ENCODE measurements at regions of chr20 and their contacts with region 1.

Region 1: DNA sequence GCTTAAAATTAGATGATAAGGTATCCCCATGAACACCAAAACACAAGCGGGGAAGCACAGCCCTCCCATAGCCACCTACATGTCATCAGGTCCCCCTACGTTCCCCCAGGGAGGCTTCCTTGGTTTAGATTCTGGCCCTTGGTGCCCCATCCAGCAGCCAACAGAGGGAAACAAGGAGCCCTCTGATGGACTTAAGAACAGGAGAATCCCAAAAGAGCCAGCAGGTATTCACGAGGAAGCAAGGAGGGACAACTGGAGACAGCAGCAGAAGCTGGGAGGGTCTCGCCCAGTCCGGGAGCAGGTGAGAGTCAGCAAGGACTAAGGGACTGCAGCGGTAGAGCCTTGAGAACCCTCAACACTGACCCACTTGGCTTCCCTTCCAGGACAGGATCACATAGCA is 58.4 kb upstream of the TOP1 start:
- DNase-seq: no peak
- ATAC-seq: no peak
- H3K4me3 Mint-ChIP-seq: no peak overlapping the region
- H3K27ac Mint-ChIP-seq: no peak overlapping the region
- H3K4me1 Mint-ChIP-seq: peaks cover 14% of the 10 kb centered on the region
- H3K27me3 Mint-ChIP-seq: peaks cover 2% of the 10 kb centered on the region
- CTCF ChIP-seq: no peak

Region 2: DNA sequence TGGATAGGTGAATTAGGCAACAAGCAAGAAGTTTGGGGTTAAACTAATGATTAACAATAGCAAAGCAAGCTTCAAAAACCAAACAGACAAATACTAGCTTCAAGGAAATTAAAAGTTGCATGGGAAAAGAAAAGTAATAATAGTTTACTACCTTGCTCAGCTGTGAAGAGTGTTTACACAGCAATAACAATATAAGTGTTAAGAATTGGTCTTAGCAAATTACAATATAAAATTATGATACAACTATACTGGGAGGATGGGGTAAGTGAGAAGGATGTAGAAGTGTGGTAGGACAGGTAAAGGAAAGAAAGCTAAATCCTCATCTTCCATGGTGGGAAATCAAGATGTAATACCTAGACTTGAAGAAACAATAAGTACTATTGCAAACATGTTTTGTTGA is 143.5 kb before region 1 on chr20:
- CTCF ChIA-PET with region 1: no interaction called
- POLR2A ChIA-PET with region 1: no interaction called
- intact Hi-C with region 1: no loop called
- DNase-seq: no peak
- ATAC-seq: no peak
- H3K4me3 Mint-ChIP-seq: no peak overlapping the region
- H3K27ac Mint-ChIP-seq: no peak overlapping the region
- H3K4me1 Mint-ChIP-seq: no peaks in the 10 kb centered on the region
- H3K27me3 Mint-ChIP-seq: peaks cover 8% of the 10 kb centered on the region
- CTCF ChIP-seq: no peak

Region 3: GRCh38 chr20:41011551-41012067 is 41.4 kb after region 1 on chr20:
- CTCF ChIA-PET with region 1: no interaction called
- POLR2A ChIA-PET with region 1: interaction called, 4 read pairs
- intact Hi-C with region 1: loop called (anchors 1 kb)
- DNase-seq: peak; percentile 40
- ATAC-seq: peak; percentile 94
- H3K4me3 Mint-ChIP-seq: peak overlapping the region; percentile 70
- H3K27ac Mint-ChIP-seq: peak overlapping the region; percentile 84
- H3K4me1 Mint-ChIP-seq: peaks cover 49% of the 10 kb centered on the region
- H3K27me3 Mint-ChIP-seq: no peaks in the 10 kb centered on the region
- CTCF ChIP-seq: no peak

Region 4: DNA sequence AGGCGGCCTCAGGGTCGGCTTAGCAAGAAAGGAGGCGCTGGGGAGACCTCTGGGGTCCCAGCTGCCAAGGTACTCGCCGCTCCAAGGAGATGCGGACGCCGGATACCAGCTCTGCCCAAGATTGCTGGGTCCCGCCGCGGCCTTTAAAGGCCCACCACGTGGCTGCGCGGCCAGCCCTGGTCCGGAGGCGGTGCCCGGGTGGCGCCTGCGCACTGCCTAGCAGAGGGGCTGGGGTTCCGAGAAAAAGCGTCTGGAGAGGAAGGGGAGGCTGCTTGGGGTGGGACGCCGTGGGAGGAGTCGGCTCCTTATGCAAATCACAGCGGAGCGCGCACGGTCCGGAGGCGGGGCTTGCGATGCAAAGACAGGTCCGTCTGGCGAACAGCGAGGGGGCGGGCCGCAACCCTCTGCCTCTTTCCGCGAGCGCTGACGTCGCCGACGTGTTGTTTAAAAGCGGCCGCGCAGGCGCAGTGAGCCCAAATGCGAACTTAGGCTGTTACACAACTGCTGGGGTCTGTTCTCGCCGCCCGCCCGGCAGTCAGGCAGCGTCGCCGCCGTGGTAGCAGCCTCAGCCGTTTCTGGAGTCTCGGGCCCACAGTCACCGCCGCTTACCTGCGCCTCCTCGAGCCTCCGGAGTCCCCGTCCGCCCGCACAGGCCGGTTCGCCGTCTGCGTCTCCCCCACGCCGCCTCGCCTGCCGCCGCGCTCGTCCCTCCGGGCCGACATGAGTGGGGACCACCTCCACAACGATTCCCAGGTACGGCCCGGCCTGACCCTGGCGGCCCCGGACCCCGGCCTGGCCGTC is 58.3 kb after region 1 on chr20 and contains the start of gene TOP1:
- CTCF ChIA-PET with region 1: no interaction called
- POLR2A ChIA-PET with region 1: no interaction called
- intact Hi-C with region 1: loop called (anchors 2 kb)
- DNase-seq: peak; percentile 98
- ATAC-seq: peak; percentile 98
- H3K4me3 Mint-ChIP-seq: peak within 1 kb of the TSS; percentile 93
- H3K27ac Mint-ChIP-seq: peak within 1 kb of the TSS; percentile 90
- H3K4me1 Mint-ChIP-seq: peaks cover 57% of the 10 kb centered on the region
- H3K27me3 Mint-ChIP-seq: no peaks in the 10 kb centered on the region
- CTCF ChIP-seq: no peak
- total RNA-seq, gene TOP1: 62.7 and 63.3 TPM in 2 replicates

Region 5: GRCh38 chr20:41064377-41064776 is 94.2 kb after region 1 on chr20:
- CTCF ChIA-PET with region 1: interaction called, 11 read pairs
- POLR2A ChIA-PET with region 1: no interaction called
- intact Hi-C with region 1: loop called (anchors 1 kb)
- DNase-seq: no peak
- ATAC-seq: peak; percentile 62
- H3K4me3 Mint-ChIP-seq: peak overlapping the region; percentile 33
- H3K27ac Mint-ChIP-seq: no peak overlapping the region
- H3K4me1 Mint-ChIP-seq: peaks cover 52% of the 10 kb centered on the region
- H3K27me3 Mint-ChIP-seq: no peaks in the 10 kb centered on the region
- CTCF ChIP-seq: no peak

Region 6: DNA sequence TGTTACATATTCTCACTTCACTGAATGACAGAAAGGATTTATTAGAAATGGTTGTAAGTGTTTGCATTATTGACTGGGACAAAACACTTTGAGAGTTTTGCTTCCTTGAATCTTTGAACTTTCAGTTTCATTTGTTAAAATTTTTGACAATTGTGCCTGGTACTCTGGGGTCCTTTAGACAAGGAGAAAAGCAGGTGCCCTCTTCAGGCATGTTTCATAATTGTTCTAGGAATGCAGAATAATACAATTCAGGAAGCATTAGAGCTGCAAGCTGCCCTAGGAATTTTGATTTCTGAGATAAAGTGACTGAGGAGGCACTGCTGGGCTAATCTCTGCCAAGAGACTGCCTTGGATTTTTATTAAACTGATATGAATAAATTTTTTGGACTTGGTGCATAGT is 108.1 kb after region 1 on chr20:
- CTCF ChIA-PET with region 1: interaction called, 20 read pairs
- POLR2A ChIA-PET with region 1: no interaction called
- intact Hi-C with region 1: loop called (anchors 1 kb)
- DNase-seq: no peak
- ATAC-seq: peak; percentile 68
- H3K4me3 Mint-ChIP-seq: no peak overlapping the region
- H3K27ac Mint-ChIP-seq: no peak overlapping the region
- H3K4me1 Mint-ChIP-seq: peaks cover 34% of the 10 kb centered on the region
- H3K27me3 Mint-ChIP-seq: no peaks in the 10 kb centered on the region
- CTCF ChIP-seq: no peak

Region 7: GRCh38 chr20:41173161-41173721 is 203.0 kb after region 1 on chr20:
- CTCF ChIA-PET with region 1: interaction called, 3 read pairs
- POLR2A ChIA-PET with region 1: no interaction called
- intact Hi-C with region 1: loop called (anchors 2 kb)
- DNase-seq: peak; percentile 67
- ATAC-seq: peak; percentile 95
- H3K4me3 Mint-ChIP-seq: no peak overlapping the region
- H3K27ac Mint-ChIP-seq: no peak overlapping the region
- H3K4me1 Mint-ChIP-seq: no peaks in the 10 kb centered on the region
- H3K27me3 Mint-ChIP-seq: no peaks in the 10 kb centered on the region
- CTCF ChIP-seq: peak; percentile 46

Region 8: DNA sequence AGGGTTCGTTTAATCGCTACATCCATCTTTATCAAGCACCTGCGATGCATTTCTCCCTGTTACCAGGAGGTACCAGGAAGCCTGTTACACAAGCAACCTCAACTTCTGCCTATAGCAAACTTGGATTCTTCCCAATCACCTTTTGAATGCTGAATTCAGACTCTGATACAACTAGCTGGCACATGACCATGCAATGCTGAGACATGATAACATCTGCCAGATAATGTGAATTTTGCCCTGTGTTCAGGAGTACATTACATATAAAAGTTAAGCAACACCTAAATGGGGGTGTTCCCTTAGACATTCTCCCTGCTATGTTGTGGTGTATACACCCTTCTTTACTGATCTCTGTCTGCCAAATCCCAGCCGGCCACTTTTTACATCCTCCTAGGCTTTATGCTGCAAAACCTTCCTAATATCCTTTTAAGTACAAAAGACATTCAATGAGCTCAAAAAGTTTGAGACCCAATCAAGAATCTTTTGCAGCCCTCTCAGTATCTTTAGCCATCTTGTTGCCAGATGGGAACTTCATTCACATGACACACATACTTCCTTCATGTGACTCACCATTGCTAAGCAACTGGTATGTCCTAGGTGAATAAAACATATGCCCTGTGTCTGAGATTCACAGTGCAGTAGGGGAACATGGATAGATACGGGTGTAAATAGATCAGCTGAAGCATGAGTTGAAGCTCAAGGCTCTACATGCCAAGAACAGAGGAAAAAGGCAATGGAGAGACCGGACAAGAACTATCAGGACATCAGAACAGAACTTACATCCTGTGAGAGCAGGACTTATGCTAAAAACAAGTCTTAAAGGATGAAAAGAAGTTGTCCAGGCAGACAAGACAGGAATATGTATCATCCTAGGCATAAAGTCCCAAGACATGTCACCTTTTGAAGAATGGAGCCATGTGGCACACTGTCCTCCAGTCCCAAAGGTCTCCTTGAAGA is 263.0 kb after region 1 on chr20:
- CTCF ChIA-PET with region 1: no interaction called
- POLR2A ChIA-PET with region 1: no interaction called
- intact Hi-C with region 1: loop called (anchors 1 kb)
- DNase-seq: no peak
- ATAC-seq: peak; percentile 56
- H3K4me3 Mint-ChIP-seq: no peak overlapping the region
- H3K27ac Mint-ChIP-seq: peak overlapping the region; percentile 36
- H3K4me1 Mint-ChIP-seq: peaks cover 26% of the 10 kb centered on the region
- H3K27me3 Mint-ChIP-seq: no peaks in the 10 kb centered on the region
- CTCF ChIP-seq: no peak